CD14-positive monocyte (primary cell): ENCODE measurements at regions of chr7 and their contacts with region 1.

Region 1: DNA sequence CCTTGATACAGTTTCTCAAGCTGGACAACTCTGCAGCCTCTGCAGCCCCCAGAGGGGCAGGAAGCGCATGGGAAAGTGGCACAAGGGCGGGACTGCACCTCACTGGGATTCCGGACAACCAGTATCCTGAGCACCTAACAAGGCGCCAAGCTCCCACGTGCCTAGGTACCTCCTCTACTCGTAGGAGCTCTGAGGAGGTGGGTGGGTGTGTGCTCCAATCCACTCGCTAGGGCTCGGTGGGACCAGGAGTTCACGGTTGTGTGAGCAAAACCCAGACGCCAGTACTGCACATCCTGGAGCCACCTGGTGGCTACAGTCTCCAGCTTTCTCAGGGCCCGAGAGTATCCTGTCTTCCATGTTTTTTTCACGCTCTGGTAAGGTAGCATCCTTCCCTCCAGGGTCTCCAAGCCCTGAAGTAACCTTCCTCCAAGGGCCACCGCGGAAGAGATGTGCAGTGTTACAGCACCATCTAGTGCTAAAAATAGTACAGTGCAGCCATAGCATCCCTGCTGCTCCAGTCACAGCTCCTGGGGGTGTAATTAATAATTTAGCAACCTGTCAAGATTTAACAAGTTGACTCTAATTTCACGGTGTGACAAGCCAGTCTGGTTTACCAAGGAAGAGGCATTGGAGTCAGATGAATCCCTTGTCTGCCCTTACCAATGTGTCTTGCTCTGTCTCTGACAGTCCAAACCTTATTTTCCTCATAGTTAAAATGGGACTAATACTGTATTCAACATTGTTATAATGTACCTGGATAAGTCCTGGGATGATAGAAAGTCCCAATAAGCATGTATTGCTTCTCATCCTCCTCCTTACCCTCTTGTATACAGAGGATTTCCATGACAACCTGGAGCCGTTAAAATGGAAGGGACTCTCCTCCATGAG is 70.4 kb downstream of the HERPUD2 start:
- DNase-seq: peak; percentile 18 to 42 (median 28)
- H3K4me3 ChIP-seq: no peak overlapping the region
- H3K4me3 Mint-ChIP-seq: no peak overlapping the region
- H3K27ac ChIP-seq: no peak overlapping the region
- H3K27ac Mint-ChIP-seq: peak overlapping the region in 3 of 7 donors; percentile 13 to 27 (median 15)
- H3K4me1 ChIP-seq: no peaks in the 10 kb centered on the region
- H3K4me1 Mint-ChIP-seq: no peaks in the 10 kb centered on the region
- H3K27me3 ChIP-seq: no peaks in the 10 kb centered on the region
- H3K27me3 Mint-ChIP-seq: no peaks in the 10 kb centered on the region
- CTCF ChIP-seq: peak; percentile 89

Region 2: DNA sequence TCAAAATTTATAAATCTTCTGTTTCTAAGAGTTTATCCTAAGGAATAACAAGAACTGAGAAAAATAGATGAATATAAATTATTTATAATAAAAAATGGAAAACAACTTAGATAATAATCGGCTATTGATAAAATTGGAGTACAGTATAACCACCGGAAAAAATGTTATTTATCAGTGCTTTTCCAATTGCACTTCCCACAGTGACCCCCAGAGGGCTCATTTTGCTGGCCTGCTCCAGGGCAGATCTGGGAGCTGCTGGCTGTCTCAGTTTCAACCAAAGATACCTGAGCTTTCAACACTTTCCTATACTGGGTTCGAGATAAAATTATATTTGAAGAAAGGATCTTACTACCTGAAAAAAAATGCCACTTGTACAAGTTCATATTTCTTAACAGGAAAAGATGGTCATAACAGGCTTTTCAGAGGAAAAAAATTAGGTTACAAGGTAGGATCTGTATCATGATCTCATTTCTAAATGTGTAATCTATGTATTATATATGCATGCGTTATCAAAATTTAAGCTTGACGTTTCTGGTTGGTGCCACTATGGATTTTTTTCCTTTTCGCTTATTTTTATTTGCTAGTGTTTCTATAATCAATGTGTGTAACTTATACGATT is 800.8 kb before region 1 on chr7:
- intact Hi-C with region 1: loop called in 1 of 2 experiments (anchors 10 kb)
- DNase-seq: no peak
- H3K4me3 ChIP-seq: no peak overlapping the region
- H3K4me3 Mint-ChIP-seq: no peak overlapping the region
- H3K27ac ChIP-seq: no peak overlapping the region
- H3K27ac Mint-ChIP-seq: no peak overlapping the region
- H3K4me1 ChIP-seq: no peaks in the 10 kb centered on the region
- H3K4me1 Mint-ChIP-seq: no peaks in the 10 kb centered on the region
- H3K27me3 ChIP-seq: no peaks in the 10 kb centered on the region
- H3K27me3 Mint-ChIP-seq: peaks cover 0 to 5% (median 4%) of the 10 kb centered on the region in 3 donors
- CTCF ChIP-seq: peak; percentile 78

Region 3: GRCh38 chr7:35424869-35425495 is 199.6 kb before region 1 on chr7:
- intact Hi-C with region 1: loop called (anchors 2 to 5 kb)
- DNase-seq: peak; percentile 21 to 42 (median 24)
- H3K4me3 ChIP-seq: no peak overlapping the region
- H3K4me3 Mint-ChIP-seq: no peak overlapping the region
- H3K27ac ChIP-seq: no peak overlapping the region
- H3K27ac Mint-ChIP-seq: no peak overlapping the region
- H3K4me1 ChIP-seq: no peaks in the 10 kb centered on the region
- H3K4me1 Mint-ChIP-seq: no peaks in the 10 kb centered on the region
- H3K27me3 ChIP-seq: peaks cover 0 to 3% of the 10 kb centered on the region in 2 donors
- H3K27me3 Mint-ChIP-seq: peaks cover 3 to 8% (median 7%) of the 10 kb centered on the region in 3 donors
- CTCF ChIP-seq: peak; percentile 78

Region 4: DNA sequence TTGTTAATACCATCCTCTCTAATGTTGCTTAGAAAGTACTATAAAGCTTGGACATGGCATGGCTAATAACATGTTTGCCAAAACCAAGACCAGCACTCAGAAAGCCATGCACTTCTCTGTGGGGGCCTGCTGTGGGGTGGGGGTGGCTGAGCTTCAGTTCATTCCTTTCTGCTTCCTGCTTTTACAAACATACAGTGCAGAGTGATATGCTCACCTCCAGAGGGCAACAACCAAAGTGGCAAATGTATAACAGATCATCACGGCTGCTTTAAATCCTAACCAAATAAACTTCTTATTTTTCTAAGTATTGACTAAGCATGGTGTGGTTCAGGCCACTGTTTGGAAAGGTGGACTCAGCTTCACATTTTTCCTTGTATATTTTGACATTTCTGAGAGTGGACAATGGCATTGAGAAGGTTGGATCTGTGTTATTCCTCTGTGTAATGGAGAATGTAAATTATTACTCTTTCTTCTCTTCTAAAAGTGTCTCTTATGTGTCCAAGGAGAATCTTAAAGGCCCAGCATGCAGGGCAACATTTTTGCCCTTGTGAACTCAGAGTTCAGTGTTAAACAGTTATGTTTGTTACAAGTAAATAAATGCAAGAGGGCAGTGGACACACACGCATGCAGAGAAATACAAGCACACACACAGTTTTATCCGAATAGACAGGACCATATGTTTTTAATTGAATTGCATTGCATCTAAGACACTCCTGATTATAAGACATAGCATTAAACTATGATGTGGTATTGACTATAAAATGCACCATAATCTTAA is 115.7 kb before region 1 on chr7:
- intact Hi-C with region 1: no loop called
- DNase-seq: no peak
- H3K4me3 ChIP-seq: no peak overlapping the region
- H3K4me3 Mint-ChIP-seq: no peak overlapping the region
- H3K27ac ChIP-seq: no peak overlapping the region
- H3K27ac Mint-ChIP-seq: no peak overlapping the region
- H3K4me1 ChIP-seq: no peaks in the 10 kb centered on the region
- H3K4me1 Mint-ChIP-seq: no peaks in the 10 kb centered on the region
- H3K27me3 ChIP-seq: no peaks in the 10 kb centered on the region
- H3K27me3 Mint-ChIP-seq: peaks cover 5 to 9% (median 8%) of the 10 kb centered on the region in 3 donors
- CTCF ChIP-seq: no peak